B cell (primary cell): ENCODE measurements at regions of chr10 and their contacts with region 1.

Region 1: GRCh38 chr10:110547139-110547761 is 20.2 kb upstream of the SMC3 start:
- DNase-seq: peak; percentile 76
- ATAC-seq: peak; percentile 68
- H3K4me3 ChIP-seq: no peak overlapping the region
- H3K4me3 Mint-ChIP-seq: no peak overlapping the region
- H3K27ac ChIP-seq: no peak overlapping the region
- H3K27ac Mint-ChIP-seq: no peak overlapping the region
- H3K4me1 ChIP-seq: no peaks in the 10 kb centered on the region
- H3K4me1 Mint-ChIP-seq: peaks cover 4% of the 10 kb centered on the region
- H3K27me3 ChIP-seq: peaks cover 0 to 9% (median 4%) of the 10 kb centered on the region in 4 experiments
- H3K27me3 Mint-ChIP-seq: peaks cover 24% of the 10 kb centered on the region
- CTCF ChIP-seq: peak; percentile 85

Region 2: GRCh38 chr10:110311357-110311949 is 235.8 kb before region 1 on chr10:
- CTCF ChIA-PET with region 1: interaction called, 113 read pairs
- POLR2A ChIA-PET with region 1: interaction called, 5 read pairs
- intact Hi-C with region 1: loop called (anchors 1 kb)
- DNase-seq: peak; percentile 73
- ATAC-seq: peak; percentile 78
- H3K4me3 ChIP-seq: no peak overlapping the region
- H3K4me3 Mint-ChIP-seq: no peak overlapping the region
- H3K27ac ChIP-seq: no peak overlapping the region
- H3K27ac Mint-ChIP-seq: no peak overlapping the region
- H3K4me1 ChIP-seq: peaks cover 3% of the 10 kb centered on the region in 2 donors
- H3K4me1 Mint-ChIP-seq: peaks cover 8% of the 10 kb centered on the region
- H3K27me3 ChIP-seq: no peaks in the 10 kb centered on the region
- H3K27me3 Mint-ChIP-seq: peaks cover 4% of the 10 kb centered on the region
- CTCF ChIP-seq: peak; percentile 76

Region 3: DNA sequence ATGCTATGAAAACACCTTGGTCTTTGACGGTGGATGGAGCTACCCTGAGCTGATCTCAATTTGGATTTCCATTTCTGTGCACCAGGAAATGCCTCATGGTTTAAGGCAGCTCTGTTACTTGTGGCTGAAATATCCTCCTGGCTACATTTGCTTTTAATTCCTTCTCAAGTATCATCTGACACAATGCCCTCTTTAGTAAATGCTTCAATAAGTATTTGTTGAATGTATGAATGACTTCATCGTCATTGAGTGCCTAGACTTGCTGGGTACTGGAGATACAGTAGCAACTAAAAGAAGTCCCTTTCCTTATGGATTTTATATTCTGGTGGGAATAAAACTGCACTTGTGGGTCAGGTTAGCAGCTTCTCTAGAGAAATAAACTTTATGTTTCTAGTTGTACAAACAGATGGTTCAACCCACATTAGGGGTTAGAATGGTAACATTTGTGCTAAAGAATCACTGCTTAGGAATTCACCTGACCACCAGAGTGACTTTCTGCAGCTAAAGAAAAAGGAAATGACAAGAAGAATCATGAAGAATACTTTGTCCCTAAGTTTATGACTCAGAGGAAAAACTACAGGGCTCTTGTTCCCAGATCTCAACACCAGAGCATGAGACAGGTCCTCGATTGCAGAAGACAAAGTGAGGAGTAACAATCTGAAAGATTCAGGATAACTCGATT is 220.8 kb before region 1 on chr10:
- CTCF ChIA-PET with region 1: interaction called, 24 read pairs
- POLR2A ChIA-PET with region 1: no interaction called
- intact Hi-C with region 1: no loop called
- DNase-seq: no peak
- ATAC-seq: no peak
- H3K4me3 ChIP-seq: no peak overlapping the region
- H3K4me3 Mint-ChIP-seq: peak overlapping the region; percentile 33
- H3K27ac ChIP-seq: no peak overlapping the region
- H3K27ac Mint-ChIP-seq: peak overlapping the region; percentile 17
- H3K4me1 ChIP-seq: peaks cover 15 to 16% of the 10 kb centered on the region in 2 donors
- H3K4me1 Mint-ChIP-seq: peaks cover 36% of the 10 kb centered on the region
- H3K27me3 ChIP-seq: no peaks in the 10 kb centered on the region
- H3K27me3 Mint-ChIP-seq: no peaks in the 10 kb centered on the region
- CTCF ChIP-seq: no peak

Region 4: GRCh38 chr10:110497438-110498086 is 49.7 kb before region 1 on chr10 and contains the start of gene DUSP5:
- CTCF ChIA-PET with region 1: interaction called, 39 read pairs
- POLR2A ChIA-PET with region 1: no interaction called
- intact Hi-C with region 1: loop called (anchors 1 kb)
- DNase-seq: peak; percentile 99
- ATAC-seq: peak; percentile 91
- H3K4me3 ChIP-seq: peak within 1 kb of the TSS in 4 of 5 experiments; percentile 57 to 71 (median 62)
- H3K4me3 Mint-ChIP-seq: peak within 1 kb of the TSS; percentile 93
- H3K27ac ChIP-seq: peak within 1 kb of the TSS; percentile 65 to 80
- H3K27ac Mint-ChIP-seq: peak within 1 kb of the TSS; percentile 93
- H3K4me1 ChIP-seq: peaks cover 35 to 51% of the 10 kb centered on the region in 2 donors
- H3K4me1 Mint-ChIP-seq: peaks cover 56% of the 10 kb centered on the region
- H3K27me3 ChIP-seq: peaks cover 0 to 14% (median 2%) of the 10 kb centered on the region in 4 experiments
- H3K27me3 Mint-ChIP-seq: peaks cover 6% of the 10 kb centered on the region
- CTCF ChIP-seq: no peak
- total RNA-seq, gene DUSP5: 10.0 and 10.8 TPM in 2 replicates

Region 5: GRCh38 chr10:110502851-110503301 is 44.4 kb before region 1 on chr10:
- CTCF ChIA-PET with region 1: interaction called, 39 read pairs
- POLR2A ChIA-PET with region 1: no interaction called
- intact Hi-C with region 1: loop called (anchors 1 kb)
- DNase-seq: peak; percentile 87
- ATAC-seq: peak; percentile 51
- H3K4me3 ChIP-seq: peak overlapping the region in 1 of 5 experiments; percentile 45
- H3K4me3 Mint-ChIP-seq: peak overlapping the region; percentile 85
- H3K27ac ChIP-seq: peak overlapping the region; percentile 82 to 87
- H3K27ac Mint-ChIP-seq: peak overlapping the region; percentile 90
- H3K4me1 ChIP-seq: peaks cover 54 to 63% of the 10 kb centered on the region in 2 donors
- H3K4me1 Mint-ChIP-seq: peaks cover 67% of the 10 kb centered on the region
- H3K27me3 ChIP-seq: peaks cover 0 to 11% (median 2%) of the 10 kb centered on the region in 4 experiments
- H3K27me3 Mint-ChIP-seq: peaks cover 6% of the 10 kb centered on the region
- CTCF ChIP-seq: no peak

Region 6: GRCh38 chr10:110600487-110601101 is 53.3 kb after region 1 on chr10:
- CTCF ChIA-PET with region 1: interaction called, 16 read pairs
- POLR2A ChIA-PET with region 1: no interaction called
- intact Hi-C with region 1: no loop called
- DNase-seq: peak; percentile 66
- ATAC-seq: peak; percentile 57
- H3K4me3 ChIP-seq: no peak overlapping the region
- H3K4me3 Mint-ChIP-seq: no peak overlapping the region
- H3K27ac ChIP-seq: no peak overlapping the region
- H3K27ac Mint-ChIP-seq: no peak overlapping the region
- H3K4me1 ChIP-seq: no peaks in the 10 kb centered on the region
- H3K4me1 Mint-ChIP-seq: no peaks in the 10 kb centered on the region
- H3K27me3 ChIP-seq: no peaks in the 10 kb centered on the region
- H3K27me3 Mint-ChIP-seq: no peaks in the 10 kb centered on the region
- CTCF ChIP-seq: peak; percentile 75

Region 7: GRCh38 chr10:110857265-110858158 is 310.3 kb after region 1 on chr10:
- CTCF ChIA-PET with region 1: no interaction called
- POLR2A ChIA-PET with region 1: no interaction called
- intact Hi-C with region 1: no loop called
- DNase-seq: no peak
- ATAC-seq: peak; percentile 26
- H3K4me3 ChIP-seq: no peak overlapping the region
- H3K4me3 Mint-ChIP-seq: peak overlapping the region; percentile 20
- H3K27ac ChIP-seq: peak overlapping the region in 1 of 2 donors; percentile 39
- H3K27ac Mint-ChIP-seq: peak overlapping the region; percentile 33
- H3K4me1 ChIP-seq: peaks cover 61% of the 10 kb centered on the region in 2 donors
- H3K4me1 Mint-ChIP-seq: peaks cover 64% of the 10 kb centered on the region
- H3K27me3 ChIP-seq: no peaks in the 10 kb centered on the region
- H3K27me3 Mint-ChIP-seq: no peaks in the 10 kb centered on the region
- CTCF ChIP-seq: no peak

Region 8: GRCh38 chr10:111018021-111018420 is 470.8 kb after region 1 on chr10:
- CTCF ChIA-PET with region 1: no interaction called
- POLR2A ChIA-PET with region 1: no interaction called
- intact Hi-C with region 1: no loop called
- DNase-seq: no peak
- ATAC-seq: no peak
- H3K4me3 ChIP-seq: no peak overlapping the region
- H3K4me3 Mint-ChIP-seq: no peak overlapping the region
- H3K27ac ChIP-seq: no peak overlapping the region
- H3K27ac Mint-ChIP-seq: no peak overlapping the region
- H3K4me1 ChIP-seq: no peaks in the 10 kb centered on the region
- H3K4me1 Mint-ChIP-seq: no peaks in the 10 kb centered on the region
- H3K27me3 ChIP-seq: no peaks in the 10 kb centered on the region
- H3K27me3 Mint-ChIP-seq: no peaks in the 10 kb centered on the region
- CTCF ChIP-seq: no peak